ENCODE measurements at regions of chr10 and their contacts with region 1.

Region 1: DNA sequence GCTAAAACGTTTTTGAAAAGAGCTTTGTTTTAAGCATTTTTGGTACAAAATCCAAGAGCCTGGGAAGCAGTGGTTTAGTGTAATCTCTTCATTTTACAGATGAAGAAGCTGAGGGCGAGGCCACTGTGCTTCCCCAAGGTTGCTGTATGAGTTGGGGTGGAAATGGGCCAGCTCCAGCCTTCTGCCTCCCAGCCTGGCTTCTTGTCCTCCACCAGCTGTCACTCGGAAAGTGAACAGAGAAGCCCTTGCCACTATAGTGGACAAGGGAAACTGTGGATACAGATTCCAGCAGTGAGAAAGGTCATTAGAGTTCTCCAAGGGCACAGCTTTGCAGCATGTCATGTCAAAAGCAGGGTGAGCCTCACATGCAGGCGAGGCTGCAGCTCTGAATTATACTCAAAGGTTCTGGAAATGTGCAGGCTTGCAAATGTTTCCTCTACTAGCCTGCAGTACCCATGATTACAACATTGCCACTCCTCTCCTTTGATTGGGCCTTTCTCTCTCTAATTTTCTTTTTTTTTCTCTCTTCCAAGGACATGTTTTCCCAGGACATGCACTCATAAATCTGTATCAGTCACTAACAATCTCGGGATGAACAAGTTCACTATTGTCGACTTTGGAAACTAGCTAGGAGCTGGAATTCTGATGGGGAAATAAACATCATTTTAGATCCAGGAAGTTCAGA is 33.0 kb downstream of the BAMBI start:
- DNase-seq: no peak
- ATAC-seq: no peak
- H3K4me3 ChIP-seq: no peak overlapping the region
- H3K27ac ChIP-seq: no peak overlapping the region
- H3K4me1 ChIP-seq: no peaks in the 10 kb centered on the region
- H3K27me3 ChIP-seq: no peaks in the 10 kb centered on the region
- CTCF ChIP-seq: no peak

Region 2: DNA sequence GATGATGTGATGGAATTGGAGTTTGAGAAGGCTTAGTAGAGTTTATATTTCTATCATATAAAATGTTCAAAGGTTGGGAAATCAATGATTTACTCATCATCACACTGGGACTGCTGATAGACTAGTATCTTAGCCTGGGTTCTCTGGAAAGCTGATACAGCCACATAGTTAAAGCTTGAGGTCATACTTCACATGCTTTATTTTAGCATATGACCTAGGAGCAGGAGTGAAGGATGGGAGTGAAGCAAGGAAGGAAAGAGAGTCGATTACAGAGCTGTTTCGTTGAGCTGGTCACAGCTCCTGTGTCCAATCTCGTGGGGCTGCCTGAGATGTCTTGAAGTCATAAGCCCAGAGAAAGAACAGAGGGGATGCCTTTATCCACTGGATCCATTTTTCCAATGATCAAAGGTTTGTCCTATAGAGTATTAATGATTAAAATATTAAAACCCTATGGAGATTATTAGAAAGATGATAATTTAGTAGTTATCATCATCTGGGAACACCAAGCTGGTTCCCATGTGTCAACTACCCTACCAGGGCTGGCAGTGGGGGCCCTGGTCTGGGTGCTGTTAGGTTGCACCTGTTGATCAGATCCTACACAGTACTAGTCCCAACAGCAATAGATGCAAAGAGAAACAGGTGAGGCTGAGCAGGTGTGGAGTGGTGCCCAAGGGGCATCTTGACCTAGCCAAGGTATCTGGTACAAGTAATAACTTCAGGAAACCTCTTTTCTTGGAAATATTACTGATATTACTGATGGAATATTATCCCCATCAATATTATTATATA is 44.8 kb after region 1 on chr10:
- CTCF ChIA-PET with region 1: no interaction called
- POLR2A ChIA-PET with region 1: no interaction called
- intact Hi-C with region 1: no loop called
- DNase-seq: no peak
- ATAC-seq: no peak
- H3K4me3 ChIP-seq: no peak overlapping the region
- H3K27ac ChIP-seq: no peak overlapping the region
- H3K4me1 ChIP-seq: peaks cover 6% of the 10 kb centered on the region
- H3K27me3 ChIP-seq: no peaks in the 10 kb centered on the region
- CTCF ChIP-seq: no peak

Region 3: GRCh38 chr10:28986117-28986792 is 275.9 kb after region 1 on chr10:
- CTCF ChIA-PET with region 1: no interaction called
- POLR2A ChIA-PET with region 1: interaction called, 21 read pairs
- intact Hi-C with region 1: no loop called
- DNase-seq: peak; percentile 61
- ATAC-seq: peak; percentile 22; the same call in 1 of the 2 replicates
- H3K4me3 ChIP-seq: no peak overlapping the region
- H3K27ac ChIP-seq: peak overlapping the region; percentile 56
- H3K4me1 ChIP-seq: peaks cover 33% of the 10 kb centered on the region
- H3K27me3 ChIP-seq: no peaks in the 10 kb centered on the region
- CTCF ChIP-seq: no peak

Region 4: GRCh38 chr10:29081951-29082699 is 371.8 kb after region 1 on chr10:
- CTCF ChIA-PET with region 1: no interaction called
- POLR2A ChIA-PET with region 1: no interaction called
- intact Hi-C with region 1: no loop called
- DNase-seq: no peak
- ATAC-seq: no peak
- H3K4me3 ChIP-seq: no peak overlapping the region
- H3K27ac ChIP-seq: no peak overlapping the region
- H3K4me1 ChIP-seq: no peaks in the 10 kb centered on the region
- H3K27me3 ChIP-seq: no peaks in the 10 kb centered on the region
- CTCF ChIP-seq: no peak